Astrocyte of the cerebellum (primary cell): ENCODE measurements at regions of chr10 and their contacts with region 1.

Region 1: DNA sequence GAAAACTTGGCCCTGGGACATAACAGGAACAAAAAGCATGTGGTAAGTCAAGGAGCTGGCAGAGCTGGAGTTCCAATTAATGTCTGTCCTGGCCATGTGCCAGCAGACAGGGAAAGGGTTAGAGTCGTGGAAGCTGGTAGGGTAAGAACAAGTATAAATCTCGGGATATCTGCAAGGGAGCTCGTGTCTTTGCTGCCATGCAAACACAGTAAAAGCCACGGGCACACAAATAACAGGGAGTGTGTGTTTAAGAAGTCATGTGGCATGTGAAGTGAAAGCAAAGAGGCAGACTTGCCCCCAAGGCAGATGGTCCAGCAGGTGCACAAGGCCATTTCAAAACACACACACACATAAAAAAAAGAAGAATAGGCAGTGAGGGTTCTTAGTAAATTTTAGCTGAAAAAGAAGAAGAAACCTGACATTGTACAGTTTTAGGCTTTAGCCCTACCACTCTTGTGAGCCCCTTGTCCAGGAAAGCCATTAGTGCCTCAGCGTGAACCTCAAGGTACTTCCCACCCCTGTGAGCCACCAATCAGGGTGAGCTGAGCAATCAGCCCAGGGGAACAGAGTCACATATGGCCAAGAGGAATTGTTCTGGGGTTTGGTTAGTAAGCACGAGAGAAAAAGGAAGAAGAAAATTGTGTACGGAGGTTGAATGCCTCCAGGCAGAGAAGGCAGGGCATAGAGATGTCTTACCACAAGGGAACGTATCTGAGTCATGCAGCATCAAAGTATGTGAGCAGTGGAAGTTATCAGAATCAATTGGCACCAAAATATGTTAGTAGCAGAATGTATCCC is 32.8 kb upstream of the ARHGAP12 start:
- DNase-seq: no peak
- H3K4me3 ChIP-seq: no peak overlapping the region
- CTCF ChIP-seq: no peak

Region 2: DNA sequence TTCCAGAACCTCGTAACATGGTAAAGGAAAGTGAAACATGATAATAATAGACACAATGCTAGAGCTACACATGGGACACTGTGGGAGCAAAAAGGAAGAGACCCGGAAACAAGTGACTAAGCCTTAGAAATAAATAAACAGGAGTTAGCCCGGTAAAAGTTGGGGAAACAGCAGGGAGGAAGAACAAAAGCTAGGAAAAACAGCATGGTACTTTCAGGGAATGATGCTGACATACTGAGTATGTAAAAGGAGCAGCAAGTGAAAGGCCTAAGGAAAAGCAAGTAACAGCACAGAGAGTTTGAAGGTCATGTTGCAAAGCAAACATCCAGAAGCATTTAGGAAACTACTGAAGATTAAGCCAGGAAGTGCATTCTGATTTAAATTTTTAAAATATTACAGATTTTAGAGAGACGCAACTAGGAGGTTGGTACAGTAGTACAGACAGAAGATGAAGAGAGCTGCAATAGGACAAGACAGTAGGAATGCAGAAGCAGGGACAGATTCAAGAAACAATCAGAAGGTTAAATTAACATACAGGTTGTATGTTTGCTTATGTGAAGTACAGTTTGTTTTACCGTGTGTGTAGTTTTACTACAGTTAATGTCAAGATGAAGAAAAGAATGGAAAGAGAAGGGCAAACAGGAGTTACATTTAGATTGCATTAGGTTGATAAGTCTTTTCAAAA is 96.5 kb before region 1 on chr10:
- in situ Hi-C with region 1: loop called (anchors 5 kb)
- DNase-seq: peak; percentile 9
- H3K4me3 ChIP-seq: no peak overlapping the region
- CTCF ChIP-seq: no peak

Region 3: GRCh38 chr10:32149252-32149955 is 187.9 kb after region 1 on chr10:
- in situ Hi-C with region 1: no loop called
- DNase-seq: peak; percentile 92
- H3K4me3 ChIP-seq: no peak overlapping the region
- CTCF ChIP-seq: no peak